PC-9 (cell line): ENCODE measurements at regions of chr7 and their contacts with region 1.

Region 1: DNA sequence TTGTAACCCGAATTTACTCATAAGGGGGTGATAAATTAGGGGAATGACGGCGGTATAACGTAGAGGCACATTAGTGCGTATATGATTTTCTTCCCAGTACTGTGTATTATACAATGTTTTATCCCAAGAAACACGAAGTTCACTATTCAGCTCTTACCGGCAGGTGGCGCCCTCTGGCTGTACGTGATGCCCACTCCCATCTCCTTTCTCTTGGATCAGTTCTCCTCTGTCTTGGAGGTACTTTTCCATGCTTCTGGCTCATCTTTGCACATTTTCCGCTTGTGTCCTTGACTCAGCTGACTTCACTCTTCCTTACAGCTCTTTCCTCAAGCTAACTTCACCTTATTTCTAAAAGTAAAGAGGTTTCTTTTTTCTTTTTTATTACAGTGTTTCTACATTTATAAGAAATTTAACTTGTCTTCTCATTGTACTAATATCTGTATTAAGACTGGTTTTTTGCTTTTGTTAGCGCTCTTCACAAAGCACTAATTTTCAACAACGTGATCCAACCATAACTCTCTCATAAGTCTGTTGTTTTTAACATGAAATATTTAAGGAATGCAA is 21.3 kb downstream of the TMEM176B start:
- DNase-seq: peak; percentile 50 to 77
- H3K4me3 ChIP-seq: no peak overlapping the region
- H3K27ac ChIP-seq: no peak overlapping the region
- H3K4me1 ChIP-seq: no peaks in the 10 kb centered on the region
- H3K27me3 ChIP-seq: peaks cover 43% of the 10 kb centered on the region
- CTCF ChIP-seq: peak; percentile 91

Region 2: GRCh38 chr7:150716368-150716767 is 62.5 kb before region 1 on chr7 and contains the start of gene GIMAP1:
- CTCF ChIA-PET with region 1: no interaction called
- POLR2A ChIA-PET with region 1: no interaction called
- intact Hi-C with region 1: no loop called
- DNase-seq: no peak
- H3K4me3 ChIP-seq: no peak within 1 kb of the TSS
- H3K27ac ChIP-seq: no peak within 1 kb of the TSS
- H3K4me1 ChIP-seq: no peaks in the 10 kb centered on the region
- H3K27me3 ChIP-seq: peaks cover 60% of the 10 kb centered on the region
- CTCF ChIP-seq: no peak
- total RNA-seq, gene GIMAP1: not detected in 2 replicates

Region 3: GRCh38 chr7:150876817-150877526 is 98.2 kb after region 1 on chr7:
- CTCF ChIA-PET with region 1: no interaction called
- POLR2A ChIA-PET with region 1: no interaction called
- intact Hi-C with region 1: loop called (anchors 5 kb)
- DNase-seq: peak; percentile 67 to 68
- H3K4me3 ChIP-seq: no peak overlapping the region
- H3K27ac ChIP-seq: no peak overlapping the region
- H3K4me1 ChIP-seq: no peaks in the 10 kb centered on the region
- H3K27me3 ChIP-seq: peaks cover 41% of the 10 kb centered on the region
- CTCF ChIP-seq: peak; percentile 49

Region 4: DNA sequence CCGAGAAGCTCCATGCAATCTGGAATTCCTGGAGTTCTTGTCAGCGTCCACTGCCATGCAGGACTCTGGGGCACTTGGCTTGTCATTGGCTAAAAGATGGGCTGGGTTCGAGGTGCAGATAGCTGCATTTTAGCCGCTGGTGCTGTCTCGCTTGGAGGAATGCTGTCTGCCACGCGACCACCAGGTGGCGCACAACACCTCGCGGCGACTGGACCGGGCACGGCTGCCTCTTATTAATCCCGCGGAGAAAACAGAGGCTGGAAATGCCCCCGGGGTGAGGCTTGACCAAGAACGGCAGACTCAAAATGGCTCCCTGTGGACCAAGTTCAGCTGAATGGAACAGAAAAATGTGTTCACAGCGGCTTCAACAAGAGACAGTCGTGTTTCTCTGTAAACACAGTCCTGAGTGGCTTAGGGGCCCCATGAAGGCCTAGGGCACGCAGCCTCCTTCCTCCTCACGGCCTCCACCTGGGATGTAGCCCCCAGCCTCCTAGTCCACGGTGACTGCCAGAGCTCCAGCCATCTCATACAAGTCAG is 119.7 kb after region 1 on chr7:
- CTCF ChIA-PET with region 1: no interaction called
- POLR2A ChIA-PET with region 1: no interaction called
- intact Hi-C with region 1: loop called (anchors 2 kb)
- DNase-seq: peak in 1 of 2 experiments; percentile 82
- H3K4me3 ChIP-seq: no peak overlapping the region
- H3K27ac ChIP-seq: no peak overlapping the region
- H3K4me1 ChIP-seq: no peaks in the 10 kb centered on the region
- H3K27me3 ChIP-seq: peaks cover 29% of the 10 kb centered on the region
- CTCF ChIP-seq: peak; percentile 95

Region 5: GRCh38 chr7:150962553-150963399 is 184.0 kb after region 1 on chr7:
- CTCF ChIA-PET with region 1: interaction called, 16 read pairs
- POLR2A ChIA-PET with region 1: no interaction called
- intact Hi-C with region 1: no loop called
- DNase-seq: peak in 1 of 2 experiments; percentile 61
- H3K4me3 ChIP-seq: no peak overlapping the region
- H3K27ac ChIP-seq: no peak overlapping the region
- H3K4me1 ChIP-seq: no peaks in the 10 kb centered on the region
- H3K27me3 ChIP-seq: peaks cover 45% of the 10 kb centered on the region
- CTCF ChIP-seq: peak; percentile 97

Region 6: GRCh38 chr7:150974468-150975391 is 195.9 kb after region 1 on chr7:
- CTCF ChIA-PET with region 1: no interaction called
- POLR2A ChIA-PET with region 1: no interaction called
- intact Hi-C with region 1: no loop called
- DNase-seq: peak in 1 of 2 experiments; percentile 67
- H3K4me3 ChIP-seq: peak overlapping the region; percentile 65
- H3K27ac ChIP-seq: no peak overlapping the region
- H3K4me1 ChIP-seq: 0 out of 2 replicates have a peak, but pooled peaks cover 4% of the 10 kb centered on the region
- H3K27me3 ChIP-seq: peaks cover 52% of the 10 kb centered on the region
- CTCF ChIP-seq: peak; percentile 42; the same call in 1 of the 2 replicates

Region 7: DNA sequence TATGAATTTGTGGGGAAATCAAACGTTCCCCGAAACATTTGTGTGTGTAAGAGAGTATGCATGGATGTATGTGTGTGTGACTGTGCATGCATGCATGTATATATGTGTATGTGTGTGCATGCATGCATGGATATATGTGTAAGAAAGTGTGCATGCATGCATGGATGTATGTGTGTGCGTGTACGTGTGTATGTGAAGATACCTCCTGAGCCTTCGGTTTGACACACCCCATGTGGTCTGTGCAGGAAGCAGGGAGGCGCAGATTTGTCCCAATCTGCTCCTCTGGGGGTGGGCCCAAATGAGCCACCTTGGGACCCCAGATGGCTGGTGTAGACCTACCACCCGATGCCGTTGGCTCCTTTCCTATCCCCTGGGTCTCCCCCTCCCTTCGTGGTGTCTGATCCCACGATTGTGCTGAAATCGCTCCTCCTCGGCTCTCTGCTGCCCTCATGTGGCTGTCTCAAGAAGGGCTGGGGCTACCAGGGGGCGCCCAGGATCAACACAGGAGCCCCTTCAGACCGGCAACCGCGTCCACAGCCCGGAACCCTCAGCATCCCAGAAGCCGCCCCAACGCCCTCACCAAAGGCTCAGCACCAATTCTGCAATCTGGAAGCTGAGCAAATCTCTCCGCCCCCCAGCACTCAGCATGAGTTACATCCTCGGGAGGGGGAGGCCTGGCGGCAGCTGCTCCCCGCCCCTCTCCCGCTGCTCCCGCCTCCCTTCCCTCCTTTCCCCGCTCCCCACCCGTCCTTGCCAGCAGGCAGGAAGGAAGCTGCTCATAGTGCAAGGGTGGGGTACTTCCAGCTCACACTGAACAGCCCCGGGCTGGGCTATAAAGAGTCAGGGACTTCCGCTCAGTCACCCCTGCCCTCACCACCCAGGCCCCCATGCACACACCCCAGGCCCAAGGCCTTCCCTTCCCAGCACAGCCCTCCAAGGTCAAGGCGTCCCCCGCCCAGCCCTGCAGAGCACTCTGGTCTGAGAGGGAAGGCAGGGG is 209.7 kb after region 1 on chr7:
- CTCF ChIA-PET with region 1: no interaction called
- POLR2A ChIA-PET with region 1: no interaction called
- intact Hi-C with region 1: loop called (anchors 1 kb)
- DNase-seq: no peak
- H3K4me3 ChIP-seq: no peak overlapping the region
- H3K27ac ChIP-seq: no peak overlapping the region
- H3K4me1 ChIP-seq: no peaks in the 10 kb centered on the region
- H3K27me3 ChIP-seq: peaks cover 22% of the 10 kb centered on the region; the same call in 1 of the 2 replicates
- CTCF ChIP-seq: peak; percentile 58; the same call in 1 of the 2 replicates

Region 8: DNA sequence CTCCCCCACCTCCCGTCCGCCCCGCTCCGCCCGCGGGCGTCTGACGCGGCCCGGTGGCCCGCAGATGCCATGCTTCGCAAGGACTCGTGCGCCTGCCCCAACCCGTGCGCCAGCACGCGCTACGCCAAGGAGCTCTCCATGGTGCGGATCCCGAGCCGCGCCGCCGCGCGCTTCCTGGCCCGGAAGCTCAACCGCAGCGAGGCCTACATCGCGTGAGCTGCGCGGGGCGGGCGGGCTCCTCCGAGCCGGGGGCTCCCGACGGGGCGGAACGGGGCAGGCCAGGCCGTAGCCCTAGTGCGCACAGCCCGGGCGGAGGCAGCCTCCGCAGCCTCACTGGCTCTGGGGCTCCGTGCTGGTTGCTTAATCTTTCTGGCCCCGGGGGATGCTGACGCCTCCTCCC is 272.3 kb after region 1 on chr7:
- CTCF ChIA-PET with region 1: no interaction called
- POLR2A ChIA-PET with region 1: no interaction called
- intact Hi-C with region 1: no loop called
- DNase-seq: no peak
- H3K4me3 ChIP-seq: no peak overlapping the region
- H3K27ac ChIP-seq: no peak overlapping the region
- H3K4me1 ChIP-seq: peaks cover 18% of the 10 kb centered on the region
- H3K27me3 ChIP-seq: no peaks in the 10 kb centered on the region
- CTCF ChIP-seq: no peak

Region 9: DNA sequence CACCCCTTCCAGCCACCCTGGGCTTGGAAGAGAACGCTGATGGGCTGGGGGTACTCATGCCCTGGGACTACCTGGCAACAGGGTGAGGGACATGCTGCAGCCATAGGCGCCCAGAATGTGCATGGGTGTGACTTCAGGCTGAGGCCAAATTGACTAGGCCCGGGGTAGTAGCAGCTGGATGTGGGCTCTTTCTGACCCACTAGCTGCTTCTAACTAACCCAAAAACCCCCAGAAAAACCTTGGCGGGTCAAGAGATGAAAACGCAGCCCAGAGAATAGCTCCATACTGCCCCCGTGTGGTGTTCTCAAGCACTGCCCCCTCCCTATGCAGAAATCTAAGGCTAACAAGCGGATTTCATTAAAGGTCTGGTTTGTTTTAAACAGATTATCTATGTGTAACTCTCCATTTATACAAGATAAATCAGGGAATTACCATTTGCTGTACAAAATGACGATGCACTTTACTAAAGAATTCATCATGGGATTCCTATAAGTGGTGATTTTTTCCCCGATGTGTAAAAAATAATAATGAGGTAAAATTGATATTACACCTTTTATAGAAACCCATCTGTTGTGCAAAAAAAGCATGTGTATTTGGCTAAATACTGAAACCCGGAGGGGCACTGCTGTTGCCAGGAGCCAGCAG is 465.5 kb after region 1 on chr7:
- CTCF ChIA-PET with region 1: no interaction called
- POLR2A ChIA-PET with region 1: no interaction called
- intact Hi-C with region 1: loop called (anchors 1 kb)
- DNase-seq: peak in 1 of 2 experiments; percentile 44
- H3K4me3 ChIP-seq: no peak overlapping the region
- H3K27ac ChIP-seq: no peak overlapping the region
- H3K4me1 ChIP-seq: no peaks in the 10 kb centered on the region; the same call in 1 of the 2 replicates
- H3K27me3 ChIP-seq: peaks cover 25% of the 10 kb centered on the region
- CTCF ChIP-seq: peak; percentile 95

Region 10: GRCh38 chr7:151304856-151305255 is 526.0 kb after region 1 on chr7:
- CTCF ChIA-PET with region 1: no interaction called
- POLR2A ChIA-PET with region 1: no interaction called
- intact Hi-C with region 1: loop called (anchors 2 kb)
- DNase-seq: no peak
- H3K4me3 ChIP-seq: no peak overlapping the region
- H3K27ac ChIP-seq: no peak overlapping the region
- H3K4me1 ChIP-seq: no peaks in the 10 kb centered on the region
- H3K27me3 ChIP-seq: peaks cover 96% of the 10 kb centered on the region
- CTCF ChIP-seq: no peak